ENCODE measurements at regions of chr6 and their contacts with region 1.

Region 1: GRCh38 chr6:144215932-144216667 is 65.8 kb downstream of the STX11 start:
- DNase-seq: peak; percentile 97
- H3K4me3 Mint-ChIP-seq: peak overlapping the region; percentile 93
- H3K27ac Mint-ChIP-seq: peak overlapping the region; percentile 98
- H3K4me1 Mint-ChIP-seq: peaks cover 34% of the 10 kb centered on the region
- H3K27me3 Mint-ChIP-seq: peaks cover 9% of the 10 kb centered on the region

Region 2: GRCh38 chr6:143940011-143940597 is 276.0 kb before region 1 on chr6:
- intact Hi-C with region 1: loop called (anchors 1 kb)
- DNase-seq: peak; percentile 86
- H3K4me3 Mint-ChIP-seq: no peak overlapping the region
- H3K27ac Mint-ChIP-seq: no peak overlapping the region
- H3K4me1 Mint-ChIP-seq: peaks cover 7% of the 10 kb centered on the region
- H3K27me3 Mint-ChIP-seq: peaks cover 2% of the 10 kb centered on the region

Region 3: DNA sequence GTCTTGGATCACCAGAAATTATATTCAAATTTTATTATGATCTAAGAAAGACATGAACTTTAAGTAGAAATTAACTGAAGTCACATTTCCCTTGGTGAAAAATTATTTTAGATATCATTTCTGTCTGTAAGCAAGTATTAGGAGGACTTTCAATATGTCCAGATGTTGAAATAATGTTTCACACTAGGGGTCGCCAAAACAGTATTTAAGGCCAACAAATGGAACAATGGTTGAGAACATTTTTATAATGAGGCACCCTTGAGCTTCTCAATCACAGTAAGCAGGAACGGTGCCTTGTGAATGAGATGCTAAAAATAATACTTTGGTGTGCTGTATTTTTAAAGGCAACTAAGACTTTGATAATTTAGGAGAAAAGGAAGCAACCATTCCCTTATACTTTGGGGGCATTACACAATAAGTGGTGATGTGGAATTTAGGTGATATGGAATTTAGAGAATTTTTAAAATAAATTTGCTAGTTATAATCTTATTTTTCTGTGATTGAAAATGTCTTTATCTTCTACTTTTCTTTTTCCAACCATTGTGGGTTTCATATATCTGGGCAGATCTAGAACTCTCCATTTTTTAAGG is 111.1 kb before region 1 on chr6:
- intact Hi-C with region 1: loop called (anchors 1 kb)
- DNase-seq: peak; percentile 87
- H3K4me3 Mint-ChIP-seq: no peak overlapping the region
- H3K27ac Mint-ChIP-seq: no peak overlapping the region
- H3K4me1 Mint-ChIP-seq: peaks cover 7% of the 10 kb centered on the region
- H3K27me3 Mint-ChIP-seq: peaks cover 6% of the 10 kb centered on the region

Region 4: GRCh38 chr6:144284783-144285547 is 68.9 kb after region 1 on chr6 and contains the start of gene UTRN:
- intact Hi-C with region 1: loop called (anchors 1 kb)
- DNase-seq: peak; percentile 84
- H3K4me3 Mint-ChIP-seq: peak within 1 kb of the TSS; percentile 91
- H3K27ac Mint-ChIP-seq: peak within 1 kb of the TSS; percentile 88
- H3K4me1 Mint-ChIP-seq: peaks cover 16% of the 10 kb centered on the region
- H3K27me3 Mint-ChIP-seq: peaks cover 39% of the 10 kb centered on the region
- total RNA-seq, gene UTRN: 36.7 and 45.1 TPM in 2 replicates

Region 5: GRCh38 chr6:144437105-144437504 is 221.0 kb after region 1 on chr6:
- intact Hi-C with region 1: no loop called
- DNase-seq: no peak
- H3K4me3 Mint-ChIP-seq: no peak overlapping the region
- H3K27ac Mint-ChIP-seq: no peak overlapping the region
- H3K4me1 Mint-ChIP-seq: peaks cover 6% of the 10 kb centered on the region
- H3K27me3 Mint-ChIP-seq: no peaks in the 10 kb centered on the region

Region 6: DNA sequence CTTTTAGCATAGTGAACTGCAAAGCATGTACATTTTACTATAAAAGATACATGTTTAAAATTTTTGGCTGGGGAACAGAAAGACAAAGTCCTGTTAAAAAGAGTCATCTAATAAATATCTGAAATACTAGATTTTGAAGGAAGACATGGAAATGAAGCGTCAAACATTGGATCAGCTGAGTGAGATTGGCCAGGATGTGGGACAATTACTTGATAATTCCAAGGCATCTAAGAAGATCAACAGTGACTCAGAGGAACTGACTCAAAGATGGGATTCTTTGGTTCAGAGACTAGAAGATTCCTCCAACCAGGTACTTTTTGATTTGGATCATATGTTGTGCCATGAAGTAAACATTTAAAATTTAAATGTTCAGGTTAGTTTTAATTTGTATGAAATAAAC is 231.4 kb after region 1 on chr6:
- intact Hi-C with region 1: no loop called
- DNase-seq: no peak
- H3K4me3 Mint-ChIP-seq: no peak overlapping the region
- H3K27ac Mint-ChIP-seq: no peak overlapping the region
- H3K4me1 Mint-ChIP-seq: peaks cover 2% of the 10 kb centered on the region
- H3K27me3 Mint-ChIP-seq: no peaks in the 10 kb centered on the region

Region 7: DNA sequence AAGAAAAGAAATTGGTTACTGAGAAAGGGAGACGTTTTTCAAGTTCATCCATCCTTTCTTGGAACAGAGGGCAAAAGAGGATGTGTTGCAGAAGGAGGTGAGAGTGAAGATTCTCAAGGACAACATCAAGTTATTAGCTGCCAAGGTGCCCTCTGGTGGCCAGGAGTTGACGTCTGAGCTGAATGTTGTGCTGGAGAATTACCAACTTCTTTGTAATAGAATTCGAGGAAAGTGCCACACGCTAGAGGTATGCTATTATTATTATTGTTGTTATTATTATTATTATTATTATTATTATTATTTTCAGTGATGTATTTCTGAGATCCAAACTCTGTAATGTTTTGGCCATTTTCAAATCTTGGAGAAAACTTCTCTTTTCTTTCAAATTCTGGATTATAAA is 266.0 kb after region 1 on chr6:
- intact Hi-C with region 1: loop called (anchors 2 kb)
- DNase-seq: peak; percentile 89
- H3K4me3 Mint-ChIP-seq: no peak overlapping the region
- H3K27ac Mint-ChIP-seq: no peak overlapping the region
- H3K4me1 Mint-ChIP-seq: peaks cover 9% of the 10 kb centered on the region
- H3K27me3 Mint-ChIP-seq: no peaks in the 10 kb centered on the region